ENCODE measurements at regions of chr1 and their contacts with region 1.

Region 1: GRCh38 chr1:111592389-111593361 is 26.9 kb upstream of the RAP1A start:
- H3K4me3 Mint-ChIP-seq: peak overlapping the region; percentile 56
- H3K27ac Mint-ChIP-seq: peak overlapping the region; percentile 97
- H3K4me1 Mint-ChIP-seq: peaks cover 42% of the 10 kb centered on the region
- H3K27me3 Mint-ChIP-seq: no peaks in the 10 kb centered on the region

Region 2: DNA sequence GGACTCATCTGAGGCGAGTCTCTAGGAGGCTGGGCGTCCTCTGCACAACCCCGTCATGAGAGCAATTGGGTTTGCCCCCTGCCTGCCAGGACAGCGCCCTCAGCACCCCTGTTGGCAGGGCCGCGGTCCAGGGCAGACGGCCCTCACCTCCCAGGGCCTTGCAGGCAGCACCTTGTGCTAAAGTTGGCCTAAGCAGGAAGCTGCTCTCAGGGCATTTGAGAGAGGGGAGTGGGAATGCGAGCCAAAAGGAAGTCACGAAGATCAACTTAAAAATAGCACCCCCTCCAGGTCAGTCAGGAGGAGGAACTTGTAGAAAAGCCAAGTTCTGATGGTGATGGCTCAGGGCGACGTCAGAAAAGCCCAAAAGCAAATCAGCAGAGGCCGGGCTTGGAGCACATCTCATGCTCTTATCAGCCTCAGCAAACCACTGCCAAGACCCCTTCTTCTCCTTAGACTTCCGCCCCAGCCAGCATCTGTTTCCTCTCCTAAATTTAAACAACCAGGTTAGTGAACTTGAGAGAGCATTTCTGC is 76.6 kb before region 1 on chr1:
- intact Hi-C with region 1: loop called (anchors 2 kb)
- H3K4me3 Mint-ChIP-seq: peak overlapping the region; percentile 84
- H3K27ac Mint-ChIP-seq: no peak overlapping the region
- H3K4me1 Mint-ChIP-seq: peaks cover 41% of the 10 kb centered on the region
- H3K27me3 Mint-ChIP-seq: no peaks in the 10 kb centered on the region

Region 3: DNA sequence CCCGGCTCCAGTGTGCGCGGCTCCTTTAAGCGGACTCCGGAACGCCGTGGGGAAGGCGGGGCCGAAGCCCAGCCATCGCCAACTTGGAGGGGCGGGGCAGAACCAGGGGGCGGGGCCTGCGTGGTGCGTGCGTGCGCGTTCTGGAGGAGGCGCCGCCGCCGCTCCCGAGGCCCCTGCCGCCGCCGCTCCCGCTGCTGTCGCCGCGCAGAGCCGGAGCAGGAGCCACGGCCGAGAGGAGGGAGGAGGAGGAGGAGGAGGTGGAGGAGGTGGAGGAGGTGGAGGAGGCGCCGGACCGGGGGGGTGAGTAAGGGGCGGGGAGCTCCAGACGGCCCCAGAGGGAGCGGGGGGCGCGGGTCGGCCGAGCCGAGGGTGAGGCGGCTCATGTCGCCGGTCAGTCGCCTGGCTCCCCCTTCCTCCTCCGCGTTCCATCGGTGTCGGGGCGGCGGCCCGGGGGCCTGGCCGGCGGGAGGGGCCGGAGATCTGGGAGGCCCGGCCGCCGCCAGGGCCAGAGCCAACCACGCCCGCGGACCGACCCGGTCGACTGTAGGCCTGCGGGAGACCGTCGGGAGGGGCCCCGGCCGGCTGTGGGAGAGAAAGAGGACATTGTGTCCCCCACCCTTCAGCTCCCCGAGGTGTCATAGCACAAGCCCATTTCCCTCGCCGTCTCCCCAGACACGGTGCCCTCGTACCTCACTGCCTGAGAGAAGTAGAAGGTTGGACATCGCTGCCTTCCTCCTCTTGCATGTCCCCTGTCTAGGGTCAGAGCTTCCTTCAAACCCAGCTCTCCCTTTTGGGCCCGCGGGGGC is 27.2 kb after region 1 on chr1 and contains the start of gene RAP1A:
- intact Hi-C with region 1: loop called (anchors 2 kb)
- H3K4me3 Mint-ChIP-seq: peak within 1 kb of the TSS; percentile 87
- H3K27ac Mint-ChIP-seq: peak within 1 kb of the TSS; percentile 92
- H3K4me1 Mint-ChIP-seq: peaks cover 76% of the 10 kb centered on the region
- H3K27me3 Mint-ChIP-seq: no peaks in the 10 kb centered on the region

Measured in dendritic cell treated with granulocyte-macrophage colony-stimulating factor and Interleukin-4, amounts not matched to agents 40 ng/mL and 50 ng/mL, for 4 days (primary cell).